Ascending aorta (tissue), 2 donors: ENCODE measurements at regions of chr21 and their contacts with region 1.

Region 1: GRCh38 chr21:29024474-29025327 is at the start of gene USP16:
- DNase-seq: peak; percentile 90 to 98
- H3K4me3 ChIP-seq: peak within 1 kb of the TSS; percentile 70 to 74
- H3K27ac ChIP-seq: peak within 1 kb of the TSS; percentile 97 to 98
- H3K4me1 ChIP-seq: peaks cover 3 to 8% of the 10 kb centered on the region in 2 donors
- H3K27me3 ChIP-seq: no peaks in the 10 kb centered on the region
- CTCF ChIP-seq: peak; percentile 13 to 29 (median 25)
- total RNA-seq, gene USP16: 7.2 TPM

Region 2: GRCh38 chr21:28992526-28993292 is 32.0 kb before region 1 on chr21 and contains the start of gene LTN1:
- intact Hi-C with region 1: loop called (anchors 2 kb)
- DNase-seq: peak; percentile 97 to 99
- H3K4me3 ChIP-seq: peak within 1 kb of the TSS; percentile 74 to 98
- H3K27ac ChIP-seq: peak within 1 kb of the TSS; percentile 86 to 90
- H3K4me1 ChIP-seq: peaks cover 5 to 11% of the 10 kb centered on the region in 2 donors
- H3K27me3 ChIP-seq: no peaks in the 10 kb centered on the region
- CTCF ChIP-seq: no peak
- total RNA-seq, gene LTN1: 5.6 TPM

Region 3: GRCh38 chr21:29002442-29003144 is 22.1 kb before region 1 on chr21:
- intact Hi-C with region 1: loop called (anchors 1 kb)
- DNase-seq: peak; percentile 85 to 97
- H3K4me3 ChIP-seq: peak overlapping the region; percentile 65 to 77
- H3K27ac ChIP-seq: peak overlapping the region; percentile 94 to 97
- H3K4me1 ChIP-seq: peaks cover 0 to 6% of the 10 kb centered on the region in 2 donors
- H3K27me3 ChIP-seq: no peaks in the 10 kb centered on the region
- CTCF ChIP-seq: no peak

Region 4: DNA sequence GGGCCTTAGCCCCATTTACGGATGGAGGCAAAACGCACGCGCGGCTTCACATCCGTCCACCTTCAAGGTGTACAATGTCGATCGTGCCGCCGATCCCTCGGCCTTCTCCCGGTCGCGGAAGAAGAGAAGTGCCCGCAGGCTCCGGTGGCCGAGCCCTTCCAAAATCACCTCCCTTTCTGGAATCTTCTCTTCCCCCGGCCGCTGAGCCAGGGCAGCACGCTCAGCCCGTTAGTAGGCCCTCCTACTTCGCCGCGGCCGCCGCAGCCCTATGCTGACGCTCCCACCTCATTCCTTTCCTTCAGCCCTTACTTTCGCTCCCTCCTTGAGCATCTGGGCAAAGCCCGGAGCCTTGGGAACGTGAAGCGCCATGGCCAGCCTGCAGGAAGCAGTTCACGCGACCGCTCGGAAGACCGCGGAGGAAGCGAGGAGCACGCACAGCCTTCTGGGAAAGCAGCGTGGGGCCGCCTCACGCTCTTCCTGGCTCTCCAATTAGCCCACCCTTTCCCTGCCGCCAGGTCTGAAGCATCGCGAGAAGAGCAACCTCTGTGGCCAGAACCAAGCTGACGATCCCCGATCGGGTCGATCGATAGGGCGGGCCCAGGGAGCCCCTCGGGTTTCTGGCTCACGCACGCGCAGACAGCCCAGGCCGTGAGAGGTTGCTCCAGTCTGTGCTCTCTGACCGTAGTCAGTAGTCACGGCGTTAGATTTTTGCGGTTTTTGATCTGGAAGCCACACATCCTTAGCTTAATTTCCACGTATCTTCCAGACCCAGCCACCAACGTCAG is 48.7 kb after region 1 on chr21 and contains the start of gene CCT8:
- intact Hi-C with region 1: loop called (anchors 1 kb)
- DNase-seq: peak; percentile 95 to 99
- H3K4me3 ChIP-seq: peak within 1 kb of the TSS; percentile 71 to 73
- H3K27ac ChIP-seq: peak within 1 kb of the TSS; percentile 83 to 86
- H3K4me1 ChIP-seq: peaks cover 0 to 6% of the 10 kb centered on the region in 2 donors
- H3K27me3 ChIP-seq: no peaks in the 10 kb centered on the region
- CTCF ChIP-seq: no peak
- total RNA-seq, gene CCT8: 36.7 TPM

Region 5: DNA sequence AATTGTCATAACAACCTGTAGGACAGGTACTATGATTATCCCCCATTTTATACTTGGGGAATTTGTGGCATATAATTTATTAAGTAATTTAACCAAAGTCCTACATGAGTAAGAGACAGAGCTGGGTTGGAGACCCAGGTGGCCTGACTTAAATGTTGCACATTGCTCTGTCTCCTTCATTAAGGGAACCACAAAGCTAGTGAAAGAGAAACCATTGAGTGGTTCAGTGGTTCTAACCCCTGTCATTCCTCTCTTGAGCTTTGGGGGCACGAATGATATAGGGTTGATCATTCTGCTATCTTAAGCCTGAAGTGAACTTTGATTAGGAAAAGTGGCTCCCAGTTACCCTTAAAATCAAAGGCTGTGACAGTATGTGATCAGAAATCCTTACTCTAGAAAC is 100.5 kb after region 1 on chr21:
- intact Hi-C with region 1: no loop called
- DNase-seq: no peak
- H3K4me3 ChIP-seq: no peak overlapping the region
- H3K27ac ChIP-seq: no peak overlapping the region
- H3K4me1 ChIP-seq: peaks cover 0 to 3% of the 10 kb centered on the region in 2 donors
- H3K27me3 ChIP-seq: no peaks in the 10 kb centered on the region
- CTCF ChIP-seq: no peak

Region 6: GRCh38 chr21:29145354-29145782 is 120.7 kb after region 1 on chr21:
- intact Hi-C with region 1: no loop called
- DNase-seq: peak in 1 of 2 donors; percentile 83
- H3K4me3 ChIP-seq: no peak overlapping the region
- H3K27ac ChIP-seq: peak overlapping the region; percentile 69 to 78
- H3K4me1 ChIP-seq: peaks cover 0 to 25% of the 10 kb centered on the region in 2 donors
- H3K27me3 ChIP-seq: no peaks in the 10 kb centered on the region
- CTCF ChIP-seq: no peak